GM12878 (cell line): ENCODE measurements at regions of chr11 and their contacts with region 1.

Region 1: DNA sequence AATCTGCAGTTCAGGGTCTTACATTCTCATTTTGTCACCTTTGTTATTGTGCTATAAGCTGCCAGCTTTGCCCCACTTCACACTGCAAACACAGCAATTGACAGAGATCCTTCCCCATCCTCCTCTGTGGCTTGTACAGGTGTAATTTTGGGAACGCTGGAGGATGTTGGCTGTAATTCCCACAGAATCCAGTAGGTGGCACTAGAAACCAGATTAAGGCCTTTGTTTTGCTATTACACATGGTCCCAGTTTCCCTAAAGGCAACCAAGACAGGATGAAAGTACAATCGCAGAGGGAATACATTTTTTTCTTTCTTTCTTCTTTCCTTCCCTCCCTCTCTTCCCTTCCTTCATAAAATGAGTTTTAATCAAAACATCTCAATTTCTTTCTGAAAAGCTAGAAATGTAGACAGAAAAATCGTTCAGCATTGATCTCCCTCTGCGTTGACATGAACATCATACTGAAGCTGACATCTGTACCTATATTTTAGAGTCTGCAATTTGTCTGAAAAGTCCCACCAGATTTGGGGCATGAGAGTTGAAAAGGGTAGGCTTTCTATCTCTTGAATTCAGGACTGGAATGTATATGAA is 21.3 kb upstream of the NELL1 start:
- DNase-seq: peak; percentile 12
- ATAC-seq: peak; percentile 74
- H3K4me3 ChIP-seq: no peak overlapping the region
- H3K27ac ChIP-seq: no peak overlapping the region
- H3K4me1 ChIP-seq: no peaks in the 10 kb centered on the region
- H3K27me3 ChIP-seq: no peaks in the 10 kb centered on the region; a peak in 1 of 4 replicates
- CTCF ChIP-seq: peak; percentile 83 to 94 (median 91); a peak in 5 of 6 replicates
- EP300 ChIP-seq: no peak
- POLR2A ChIP-seq: no peak
- RAD21 ChIP-seq: peak; percentile 79

Region 2: DNA sequence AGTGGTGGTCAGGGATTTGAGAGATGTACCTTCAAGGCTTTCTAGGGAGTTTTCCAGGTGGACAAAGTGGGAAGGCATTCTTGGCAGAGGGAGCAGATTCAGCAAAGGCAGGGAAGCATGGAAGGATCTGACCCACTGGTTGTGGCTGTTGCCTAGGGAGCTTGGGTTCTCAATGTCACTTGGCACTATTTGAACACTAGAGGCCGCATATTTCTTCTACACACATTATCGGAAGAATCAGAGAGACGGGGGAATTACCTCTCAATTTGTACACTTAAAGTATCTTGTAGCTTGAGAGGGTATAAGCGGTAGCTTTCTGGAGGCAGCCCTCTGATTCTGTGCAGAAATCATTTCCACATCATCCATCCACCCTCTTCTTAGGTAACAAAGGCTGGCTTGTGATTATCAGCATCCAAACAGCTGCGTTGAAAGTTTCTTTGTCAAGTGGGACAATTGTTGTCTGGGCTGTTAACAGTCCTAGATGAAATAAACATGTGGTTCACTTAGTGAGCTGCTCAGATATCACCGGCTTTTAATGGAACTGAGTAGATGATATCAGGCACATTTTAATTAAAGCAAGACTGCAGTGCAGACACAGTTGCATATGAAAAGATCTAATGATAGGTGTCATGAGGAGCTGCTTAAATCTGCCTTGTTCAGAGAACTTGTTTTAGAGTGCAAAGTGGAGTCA is 23.9 kb after region 1 on chr11:
- CTCF ChIA-PET with region 1: interaction called, 46 read pairs
- POLR2A ChIA-PET with region 1: no interaction called
- RAD21 ChIA-PET with region 1: no interaction called
- SMC1A ChIA-PET with region 1: interaction called, 4 read pairs
- in situ Hi-C with region 1: no loop called
- intact Hi-C with region 1: loop called (anchors 2 kb)
- DNase-seq: no peak
- ATAC-seq: peak; percentile 84
- H3K4me3 ChIP-seq: no peak overlapping the region
- H3K27ac ChIP-seq: no peak overlapping the region
- H3K4me1 ChIP-seq: no peaks in the 10 kb centered on the region
- H3K27me3 ChIP-seq: peaks cover 10 to 13% of the 10 kb centered on the region in 2 experiments
- CTCF ChIP-seq: peak in 2 of 3 experiments; percentile 22 to 30; a peak in 3 of 6 replicates
- EP300 ChIP-seq: no peak
- POLR2A ChIP-seq: no peak
- RAD21 ChIP-seq: no peak

Region 3: GRCh38 chr11:20723366-20723765 is 75.3 kb after region 1 on chr11:
- CTCF ChIA-PET with region 1: no interaction called
- POLR2A ChIA-PET with region 1: no interaction called
- RAD21 ChIA-PET with region 1: no interaction called
- SMC1A ChIA-PET with region 1: no interaction called
- in situ Hi-C with region 1: no loop called
- intact Hi-C with region 1: no loop called
- DNase-seq: no peak
- ATAC-seq: no peak
- H3K4me3 ChIP-seq: no peak overlapping the region
- H3K27ac ChIP-seq: no peak overlapping the region
- H3K4me1 ChIP-seq: no peaks in the 10 kb centered on the region
- H3K27me3 ChIP-seq: no peaks in the 10 kb centered on the region
- CTCF ChIP-seq: no peak
- EP300 ChIP-seq: no peak
- POLR2A ChIP-seq: no peak
- RAD21 ChIP-seq: no peak

Region 4: GRCh38 chr11:20873054-20873453 is 225.0 kb after region 1 on chr11:
- CTCF ChIA-PET with region 1: interaction called, 3 read pairs
- POLR2A ChIA-PET with region 1: no interaction called
- RAD21 ChIA-PET with region 1: no interaction called
- SMC1A ChIA-PET with region 1: interaction called, 3 read pairs
- in situ Hi-C with region 1: no loop called
- intact Hi-C with region 1: loop called (anchors 1 kb)
- DNase-seq: no peak
- ATAC-seq: peak; percentile 72
- H3K4me3 ChIP-seq: no peak overlapping the region
- H3K27ac ChIP-seq: no peak overlapping the region
- H3K4me1 ChIP-seq: no peaks in the 10 kb centered on the region
- H3K27me3 ChIP-seq: no peaks in the 10 kb centered on the region; a peak in 1 of 4 replicates
- CTCF ChIP-seq: peak; percentile 38 to 41 (median 39)
- EP300 ChIP-seq: no peak
- POLR2A ChIP-seq: no peak
- RAD21 ChIP-seq: 0 out of 2 replicates have a peak, but pooled peaks have one; percentile 7

Region 5: DNA sequence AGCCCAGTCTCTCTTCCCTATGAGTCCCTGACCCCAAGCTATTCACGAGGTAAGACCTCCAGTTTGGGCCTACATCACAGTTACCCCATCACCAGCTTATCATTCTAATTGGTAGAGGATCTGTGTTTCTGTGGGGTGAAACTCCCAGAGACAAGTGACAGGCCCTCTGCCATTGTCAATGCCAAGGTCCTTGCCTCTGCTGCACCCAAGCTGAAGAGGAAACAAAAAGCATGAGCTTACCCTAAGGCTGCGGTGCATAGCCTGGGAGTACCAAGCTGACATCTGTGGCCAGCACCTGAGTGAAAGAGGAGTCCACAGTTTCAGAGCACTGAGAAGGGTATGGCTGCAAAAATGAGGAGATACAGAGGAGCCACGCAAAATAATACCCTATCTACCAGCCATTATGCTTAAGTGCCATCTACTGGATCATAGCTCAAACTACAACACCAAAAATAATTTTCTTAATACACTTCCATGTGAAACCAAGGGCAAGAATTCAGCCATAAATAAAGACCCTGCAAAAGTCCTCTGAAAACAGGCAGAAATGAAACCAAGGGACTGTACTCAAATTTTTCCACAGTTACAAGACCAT is 1482.5 kb after region 1 on chr11:
- CTCF ChIA-PET with region 1: interaction called, 3 read pairs
- POLR2A ChIA-PET with region 1: no interaction called
- RAD21 ChIA-PET with region 1: interaction called, 3 read pairs
- SMC1A ChIA-PET with region 1: no interaction called
- in situ Hi-C with region 1: loop called (anchors 10 kb)
- intact Hi-C with region 1: loop called (anchors 5 kb)
- DNase-seq: no peak
- ATAC-seq: peak; percentile 75
- H3K4me3 ChIP-seq: no peak overlapping the region
- H3K27ac ChIP-seq: no peak overlapping the region
- H3K4me1 ChIP-seq: no peaks in the 10 kb centered on the region
- H3K27me3 ChIP-seq: no peaks in the 10 kb centered on the region
- CTCF ChIP-seq: peak; percentile 28 to 56 (median 37); a peak in 5 of 6 replicates
- EP300 ChIP-seq: no peak
- POLR2A ChIP-seq: no peak
- RAD21 ChIP-seq: peak; percentile 45

Region 6: GRCh38 chr11:22304337-22304961 is 1656.4 kb after region 1 on chr11:
- CTCF ChIA-PET with region 1: no interaction called
- POLR2A ChIA-PET with region 1: no interaction called
- RAD21 ChIA-PET with region 1: no interaction called
- SMC1A ChIA-PET with region 1: no interaction called
- in situ Hi-C with region 1: loop called (anchors 10 kb)
- intact Hi-C with region 1: loop called (anchors 5 kb)
- DNase-seq: no peak
- ATAC-seq: peak; percentile 66
- H3K4me3 ChIP-seq: no peak overlapping the region
- H3K27ac ChIP-seq: no peak overlapping the region
- H3K4me1 ChIP-seq: no peaks in the 10 kb centered on the region
- H3K27me3 ChIP-seq: no peaks in the 10 kb centered on the region
- CTCF ChIP-seq: peak; percentile 40 to 64 (median 48); a peak in 5 of 6 replicates
- EP300 ChIP-seq: no peak
- POLR2A ChIP-seq: no peak
- RAD21 ChIP-seq: peak; percentile 73